MCF 10A (cell line): ENCODE measurements at regions of chr18 and their contacts with region 1.

Region 1: DNA sequence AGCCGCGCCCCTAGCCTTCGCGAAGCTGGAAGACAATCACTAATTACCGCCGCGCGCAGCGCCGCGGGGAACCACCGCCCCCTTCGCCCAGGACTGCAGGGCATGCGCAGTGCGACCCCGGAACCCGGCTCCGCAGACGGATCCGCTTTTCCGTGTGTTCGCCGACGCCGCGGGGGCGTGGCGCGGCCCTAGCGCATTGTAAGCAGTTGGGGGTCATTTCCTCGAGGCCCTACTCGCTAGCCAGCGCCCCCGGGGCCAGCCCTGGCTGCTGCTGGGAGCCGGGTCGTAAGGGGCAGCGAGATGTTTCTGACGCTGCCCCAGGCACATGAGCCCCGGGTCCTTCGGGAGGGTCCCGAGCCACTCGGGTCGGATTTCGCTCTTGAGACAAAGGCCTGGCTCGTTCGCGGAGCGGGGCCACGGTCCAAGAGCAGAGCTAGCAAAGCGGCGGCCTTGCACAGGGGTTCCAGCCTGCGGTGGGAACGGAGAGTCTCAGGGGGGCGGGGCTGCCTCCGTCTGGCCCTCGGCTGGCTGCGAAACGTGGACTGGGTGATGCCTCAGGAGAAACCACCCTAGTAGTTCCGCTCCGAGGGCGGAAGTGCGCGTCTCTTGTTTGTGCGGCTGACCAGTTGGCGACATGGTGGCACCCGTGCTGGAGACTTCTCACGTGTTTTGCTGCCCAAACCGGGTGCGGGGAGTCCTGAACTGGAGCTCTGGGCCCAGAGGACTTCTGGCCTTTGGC is at the starts of genes ELP2 and SLC39A6:
- DNase-seq: peak; percentile 94
- H3K4me3 Mint-ChIP-seq: peak within 1 kb of the TSS; percentile 96
- H3K27ac Mint-ChIP-seq: peak within 1 kb of the TSS; percentile 97
- H3K4me1 Mint-ChIP-seq: peaks cover 39% of the 10 kb centered on the region
- H3K27me3 Mint-ChIP-seq: no peaks in the 10 kb centered on the region
- CTCF ChIP-seq: no peak
- total RNA-seq, gene ELP2: 100 and 105 TPM in 2 replicates
- total RNA-seq, gene SLC39A6: 49.7 and 53.5 TPM in 2 replicates

Region 2: GRCh38 chr18:35972197-35973052 is 157.0 kb before region 1 on chr18 and contains the start of gene RMP24:
- CTCF ChIA-PET with region 1: no interaction called
- POLR2A ChIA-PET with region 1: interaction called, 22 read pairs
- intact Hi-C with region 1: no loop called
- DNase-seq: peak; percentile 96
- H3K4me3 Mint-ChIP-seq: peak within 1 kb of the TSS; percentile 93
- H3K27ac Mint-ChIP-seq: peak within 1 kb of the TSS; percentile 97
- H3K4me1 Mint-ChIP-seq: peaks cover 32% of the 10 kb centered on the region
- H3K27me3 Mint-ChIP-seq: no peaks in the 10 kb centered on the region
- CTCF ChIP-seq: no peak

Region 3: GRCh38 chr18:36015629-36016028 is 113.8 kb before region 1 on chr18:
- CTCF ChIA-PET with region 1: interaction called, 9 read pairs
- POLR2A ChIA-PET with region 1: interaction called, 8 read pairs
- intact Hi-C with region 1: loop called (anchors 2 kb)
- DNase-seq: no peak
- H3K4me3 Mint-ChIP-seq: no peak overlapping the region
- H3K27ac Mint-ChIP-seq: no peak overlapping the region
- H3K4me1 Mint-ChIP-seq: peaks cover 4% of the 10 kb centered on the region
- H3K27me3 Mint-ChIP-seq: no peaks in the 10 kb centered on the region
- CTCF ChIP-seq: no peak

Region 4: GRCh38 chr18:36067055-36067957 is 62.2 kb before region 1 on chr18 and contains the start of gene RPRD1A:
- CTCF ChIA-PET with region 1: interaction called, 4 read pairs
- POLR2A ChIA-PET with region 1: interaction called, 44 read pairs
- intact Hi-C with region 1: no loop called
- DNase-seq: peak; percentile 94
- H3K4me3 Mint-ChIP-seq: peak within 1 kb of the TSS; percentile 91
- H3K27ac Mint-ChIP-seq: peak within 1 kb of the TSS; percentile 92
- H3K4me1 Mint-ChIP-seq: peaks cover 12% of the 10 kb centered on the region
- H3K27me3 Mint-ChIP-seq: no peaks in the 10 kb centered on the region
- CTCF ChIP-seq: no peak
- total RNA-seq, gene RPRD1A: 89.1 and 116 TPM in 2 replicates

Region 5: GRCh38 chr18:36179562-36180355 is 50.3 kb after region 1 on chr18:
- CTCF ChIA-PET with region 1: no interaction called
- POLR2A ChIA-PET with region 1: interaction called, 10 read pairs
- intact Hi-C with region 1: no loop called
- DNase-seq: peak; percentile 90
- H3K4me3 Mint-ChIP-seq: no peak overlapping the region
- H3K27ac Mint-ChIP-seq: peak overlapping the region; percentile 64
- H3K4me1 Mint-ChIP-seq: peaks cover 30% of the 10 kb centered on the region
- H3K27me3 Mint-ChIP-seq: no peaks in the 10 kb centered on the region
- CTCF ChIP-seq: no peak

Region 6: GRCh38 chr18:36186911-36187834 is 57.7 kb after region 1 on chr18 and contains the start of gene MOCOS:
- CTCF ChIA-PET with region 1: interaction called, 3 read pairs
- POLR2A ChIA-PET with region 1: interaction called, 92 read pairs
- intact Hi-C with region 1: loop called (anchors 2 kb)
- DNase-seq: peak; percentile 86
- H3K4me3 Mint-ChIP-seq: peak within 1 kb of the TSS; percentile 96
- H3K27ac Mint-ChIP-seq: peak within 1 kb of the TSS; percentile 89
- H3K4me1 Mint-ChIP-seq: peaks cover 34% of the 10 kb centered on the region
- H3K27me3 Mint-ChIP-seq: no peaks in the 10 kb centered on the region
- CTCF ChIP-seq: no peak
- total RNA-seq, gene MOCOS: 69.1 and 81.1 TPM in 2 replicates

Region 7: GRCh38 chr18:36284671-36285295 is 155.3 kb after region 1 on chr18:
- CTCF ChIA-PET with region 1: interaction called, 3 read pairs
- POLR2A ChIA-PET with region 1: no interaction called
- intact Hi-C with region 1: loop called (anchors 1 kb)
- DNase-seq: peak; percentile 75
- H3K4me3 Mint-ChIP-seq: no peak overlapping the region
- H3K27ac Mint-ChIP-seq: no peak overlapping the region
- H3K4me1 Mint-ChIP-seq: no peaks in the 10 kb centered on the region
- H3K27me3 Mint-ChIP-seq: no peaks in the 10 kb centered on the region
- CTCF ChIP-seq: peak; percentile 67